Activated naive CD4-positive, alpha-beta T cell treated with anti-CD3 and anti-CD28 coated beads for 36 hours (primary cell): ENCODE measurements at regions of chr17 and their contacts with region 1.

Region 1: GRCh38 chr17:32755045-32755805 is 121.7 kb downstream of the MYO1D start:
- DNase-seq: no peak
- H3K4me3 Mint-ChIP-seq: no peak overlapping the region
- H3K27ac Mint-ChIP-seq: no peak overlapping the region
- H3K4me1 Mint-ChIP-seq: peaks cover 13% of the 10 kb centered on the region
- H3K27me3 Mint-ChIP-seq: no peaks in the 10 kb centered on the region

Region 2: DNA sequence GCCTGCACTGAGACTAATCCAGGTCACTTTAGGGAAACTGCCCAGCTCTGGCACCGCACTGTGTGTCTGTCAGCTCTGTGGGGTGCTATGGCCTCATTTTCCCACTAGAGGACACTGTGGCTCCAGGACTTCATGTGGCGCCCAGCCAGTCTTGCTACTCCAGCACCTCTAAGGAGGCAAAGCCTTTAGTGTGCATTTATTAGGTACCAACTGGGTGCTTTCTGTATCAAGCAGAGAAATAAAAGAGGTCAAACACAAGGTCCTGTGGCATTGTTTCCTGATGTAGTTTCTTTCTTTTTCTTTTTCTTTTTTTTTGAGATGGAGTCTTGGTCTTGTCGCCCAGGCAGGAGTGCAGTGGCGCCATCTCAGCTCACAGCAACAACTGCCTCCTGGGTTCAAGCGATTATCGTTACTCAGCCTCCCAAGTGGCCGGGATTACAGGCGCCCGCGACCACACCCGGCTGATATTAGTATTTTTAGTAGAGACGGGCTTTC is 502.1 kb before region 1 on chr17:
- CTCF ChIA-PET with region 1: interaction called, 4 read pairs
- intact Hi-C with region 1: loop called (anchors 1 kb)
- DNase-seq: peak; percentile 89
- H3K4me3 Mint-ChIP-seq: no peak overlapping the region
- H3K27ac Mint-ChIP-seq: no peak overlapping the region
- H3K4me1 Mint-ChIP-seq: no peaks in the 10 kb centered on the region
- H3K27me3 Mint-ChIP-seq: peaks cover 3% of the 10 kb centered on the region

Region 3: DNA sequence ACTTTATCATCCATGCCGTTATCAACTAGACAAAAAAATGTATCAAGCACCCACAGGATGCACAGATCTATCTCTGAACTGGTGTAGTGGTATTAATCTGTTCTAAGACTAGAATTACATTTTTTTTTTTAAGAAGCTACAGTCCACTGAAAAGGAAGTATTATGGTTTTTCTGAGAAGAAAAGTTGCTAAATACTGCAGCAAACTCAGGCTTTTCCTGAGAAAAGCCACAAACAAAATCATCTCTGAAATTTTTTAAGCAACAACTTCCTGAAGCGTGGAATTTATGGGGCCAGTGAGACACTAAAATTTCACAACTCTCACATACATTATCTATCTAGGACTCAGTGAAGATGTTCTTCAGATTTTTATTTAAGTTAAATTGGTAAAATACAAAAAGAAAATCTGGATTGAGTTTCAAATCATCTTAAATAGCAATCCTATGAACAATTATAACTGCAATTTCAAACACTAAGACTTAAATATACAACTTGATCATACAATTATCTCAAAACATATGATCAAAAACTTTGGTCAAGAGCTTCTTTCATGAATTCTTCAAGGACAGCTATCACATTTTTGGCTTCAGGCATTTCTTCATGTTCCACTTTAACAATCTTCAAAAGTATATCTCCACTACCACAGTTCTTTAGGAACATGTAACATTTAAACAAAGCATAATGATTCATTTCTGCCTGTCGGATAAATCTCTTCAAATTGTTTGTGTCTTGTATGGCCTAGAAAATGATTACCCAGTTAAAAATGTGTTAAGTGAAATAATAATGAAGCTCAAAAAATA is 423.8 kb before region 1 on chr17:
- CTCF ChIA-PET with region 1: no interaction called
- intact Hi-C with region 1: no loop called
- DNase-seq: no peak
- H3K4me3 Mint-ChIP-seq: no peak overlapping the region
- H3K27ac Mint-ChIP-seq: no peak overlapping the region
- H3K4me1 Mint-ChIP-seq: peaks cover 21% of the 10 kb centered on the region
- H3K27me3 Mint-ChIP-seq: no peaks in the 10 kb centered on the region

Region 4: GRCh38 chr17:32461853-32462617 is 293.2 kb before region 1 on chr17:
- CTCF ChIA-PET with region 1: interaction called, 18 read pairs
- intact Hi-C with region 1: loop called (anchors 1 kb)
- DNase-seq: peak; percentile 83
- H3K4me3 Mint-ChIP-seq: no peak overlapping the region
- H3K27ac Mint-ChIP-seq: peak overlapping the region; percentile 72
- H3K4me1 Mint-ChIP-seq: peaks cover 37% of the 10 kb centered on the region
- H3K27me3 Mint-ChIP-seq: no peaks in the 10 kb centered on the region

Region 5: GRCh38 chr17:32609085-32609484 is 146.1 kb before region 1 on chr17:
- CTCF ChIA-PET with region 1: no interaction called
- intact Hi-C with region 1: loop called (anchors 5 kb)
- DNase-seq: peak; percentile 89
- H3K4me3 Mint-ChIP-seq: no peak overlapping the region
- H3K27ac Mint-ChIP-seq: no peak overlapping the region
- H3K4me1 Mint-ChIP-seq: peaks cover 8% of the 10 kb centered on the region
- H3K27me3 Mint-ChIP-seq: no peaks in the 10 kb centered on the region

Region 6: GRCh38 chr17:32659419-32659842 is 95.8 kb before region 1 on chr17:
- CTCF ChIA-PET with region 1: interaction called, 14 read pairs
- intact Hi-C with region 1: loop called (anchors 1 kb)
- DNase-seq: peak; percentile 86
- H3K4me3 Mint-ChIP-seq: no peak overlapping the region
- H3K27ac Mint-ChIP-seq: no peak overlapping the region
- H3K4me1 Mint-ChIP-seq: no peaks in the 10 kb centered on the region
- H3K27me3 Mint-ChIP-seq: no peaks in the 10 kb centered on the region

Region 7: DNA sequence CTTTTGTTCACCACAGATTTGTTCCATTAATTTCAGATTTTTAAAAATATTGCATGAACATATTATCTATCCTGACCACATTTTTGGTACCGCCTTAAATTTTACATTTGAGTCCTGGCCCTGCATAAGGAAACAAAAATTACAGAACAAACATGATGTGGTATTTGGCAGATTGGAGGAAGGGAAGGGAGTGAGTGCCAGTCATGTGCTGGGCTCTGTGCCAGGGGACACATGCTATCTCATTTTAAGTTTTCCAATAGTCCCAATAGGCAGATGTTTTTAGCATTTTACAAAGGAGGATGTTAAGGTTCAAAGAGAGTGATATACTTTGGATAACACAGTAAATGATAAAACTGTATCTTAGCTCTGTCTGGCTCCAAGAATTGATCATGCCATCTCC is 83.3 kb before region 1 on chr17:
- CTCF ChIA-PET with region 1: no interaction called
- intact Hi-C with region 1: loop called (anchors 1 kb)
- DNase-seq: no peak
- H3K4me3 Mint-ChIP-seq: no peak overlapping the region
- H3K27ac Mint-ChIP-seq: no peak overlapping the region
- H3K4me1 Mint-ChIP-seq: no peaks in the 10 kb centered on the region
- H3K27me3 Mint-ChIP-seq: no peaks in the 10 kb centered on the region

Region 8: GRCh38 chr17:32723310-32723955 is 31.8 kb before region 1 on chr17:
- CTCF ChIA-PET with region 1: no interaction called
- intact Hi-C with region 1: no loop called
- DNase-seq: no peak
- H3K4me3 Mint-ChIP-seq: no peak overlapping the region
- H3K27ac Mint-ChIP-seq: no peak overlapping the region
- H3K4me1 Mint-ChIP-seq: no peaks in the 10 kb centered on the region
- H3K27me3 Mint-ChIP-seq: no peaks in the 10 kb centered on the region

Region 9: GRCh38 chr17:32819035-32819434 is 63.8 kb after region 1 on chr17:
- CTCF ChIA-PET with region 1: no interaction called
- intact Hi-C with region 1: no loop called
- DNase-seq: no peak
- H3K4me3 Mint-ChIP-seq: no peak overlapping the region
- H3K27ac Mint-ChIP-seq: no peak overlapping the region
- H3K4me1 Mint-ChIP-seq: peaks cover 8% of the 10 kb centered on the region
- H3K27me3 Mint-ChIP-seq: peaks cover 12% of the 10 kb centered on the region